ENCODE measurements at regions of chr9 and their contacts with region 1.

Region 1: DNA sequence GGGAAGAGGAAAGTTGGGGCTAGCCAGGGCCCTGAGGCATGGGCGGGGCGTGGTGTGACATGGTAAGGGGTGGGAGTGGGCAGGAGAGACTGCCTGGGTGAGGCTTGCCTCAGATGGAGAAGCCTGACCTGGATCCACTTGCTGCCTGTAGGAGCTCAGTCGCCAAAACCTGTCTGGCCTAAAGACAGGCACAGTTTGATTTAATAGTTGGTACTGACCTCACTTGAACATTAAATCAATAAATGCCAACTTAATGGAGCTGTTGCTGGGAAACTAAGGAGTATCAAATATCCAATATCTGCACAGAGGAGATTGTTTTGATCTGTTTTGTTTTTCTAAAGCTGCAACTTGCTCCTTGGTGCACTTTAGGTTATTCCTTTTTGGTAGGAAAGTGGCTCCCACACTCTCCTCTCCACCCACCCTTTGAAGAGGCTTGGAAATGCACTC is 86.4 kb downstream of the RCL1 start:
- DNase-seq: no peak
- H3K4me3 ChIP-seq: no peak overlapping the region
- H3K27ac ChIP-seq: no peak overlapping the region
- H3K4me1 ChIP-seq: peaks cover under 1 to 12% of the 10 kb centered on the region in 2 donors
- H3K27me3 ChIP-seq: no peaks in the 10 kb centered on the region
- CTCF ChIP-seq: no peak

Region 2: DNA sequence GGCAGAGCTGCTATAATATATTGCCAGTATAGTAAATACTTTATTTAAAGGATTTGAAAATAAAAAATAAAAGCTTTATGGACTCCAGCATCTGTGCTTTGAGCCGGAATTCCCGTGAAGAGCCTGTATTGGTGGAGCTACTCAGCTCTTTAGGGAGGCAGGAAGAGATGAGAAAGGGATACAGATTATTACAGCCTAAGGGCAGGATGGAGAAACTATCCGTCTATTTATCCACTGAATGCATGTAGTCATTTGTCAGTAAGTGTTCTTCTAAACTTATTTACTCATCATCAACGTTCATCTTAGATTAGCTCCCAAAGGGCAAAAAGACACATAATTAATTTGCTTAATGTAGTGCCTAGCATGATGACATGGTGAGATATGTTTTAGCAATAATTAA is 340.5 kb before region 1 on chr9:
- intact Hi-C with region 1: no loop called
- DNase-seq: no peak
- H3K4me3 ChIP-seq: no peak overlapping the region
- H3K27ac ChIP-seq: no peak overlapping the region
- H3K4me1 ChIP-seq: no peaks in the 10 kb centered on the region
- H3K27me3 ChIP-seq: no peaks in the 10 kb centered on the region
- CTCF ChIP-seq: no peak

Region 3: DNA sequence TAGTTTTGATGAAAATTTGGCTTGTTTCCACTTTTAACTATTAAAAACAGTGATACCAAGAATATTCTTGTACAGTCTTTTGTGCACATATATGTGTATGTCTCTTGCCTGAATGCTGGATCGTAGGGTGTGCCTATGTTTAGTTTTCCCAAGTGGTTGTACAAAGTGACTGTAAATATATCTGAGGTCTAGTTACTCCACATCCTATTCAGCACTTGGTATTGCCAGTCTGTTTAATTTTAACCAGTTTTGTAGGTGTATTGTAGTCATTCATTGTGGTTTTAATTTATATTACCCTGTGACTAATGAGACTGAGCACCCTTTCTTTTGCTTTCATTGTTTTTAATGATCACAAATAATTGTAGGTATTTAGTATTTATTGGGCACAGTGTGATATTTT is 68.6 kb before region 1 on chr9:
- intact Hi-C with region 1: loop called (anchors 2 kb)
- DNase-seq: no peak
- H3K4me3 ChIP-seq: no peak overlapping the region
- H3K27ac ChIP-seq: no peak overlapping the region
- H3K4me1 ChIP-seq: no peaks in the 10 kb centered on the region
- H3K27me3 ChIP-seq: no peaks in the 10 kb centered on the region
- CTCF ChIP-seq: no peak

Region 4: GRCh38 chr9:4921449-4921848 is 42.3 kb after region 1 on chr9:
- intact Hi-C with region 1: no loop called
- DNase-seq: no peak
- H3K4me3 ChIP-seq: no peak overlapping the region
- H3K27ac ChIP-seq: no peak overlapping the region
- H3K4me1 ChIP-seq: peaks cover 3 to 13% of the 10 kb centered on the region in 2 donors
- H3K27me3 ChIP-seq: no peaks in the 10 kb centered on the region
- CTCF ChIP-seq: no peak

Measured in ascending aorta (tissue), 2 donors.